ENCODE measurements at regions of chr1 and their contacts with region 1.

Region 1: GRCh38 chr1:192489748-192490147 is 85.8 kb upstream of the RGS1 start:
- DNase-seq: peak in 2 of 3 donors; percentile 27 to 33
- ATAC-seq: peak; percentile 78
- H3K4me3 ChIP-seq: no peak overlapping the region
- H3K4me1 ChIP-seq: no peaks in the 10 kb centered on the region
- CTCF ChIP-seq: no peak

Region 2: GRCh38 chr1:192270398-192270797 is 219.3 kb before region 1 on chr1:
- intact Hi-C with region 1: no loop called
- DNase-seq: no peak
- ATAC-seq: no peak
- H3K4me3 ChIP-seq: no peak overlapping the region
- H3K4me1 ChIP-seq: no peaks in the 10 kb centered on the region
- CTCF ChIP-seq: no peak

Region 3: GRCh38 chr1:192580351-192580962 is 90.7 kb after region 1 on chr1:
- intact Hi-C with region 1: loop called in 1 of 2 experiments (anchors 10 kb)
- DNase-seq: peak in 1 of 3 donors; percentile 53
- ATAC-seq: peak; percentile 66
- H3K4me3 ChIP-seq: no peak overlapping the region
- H3K4me1 ChIP-seq: no peaks in the 10 kb centered on the region
- CTCF ChIP-seq: no peak